ENCODE measurements at regions of chr17 and their contacts with region 1.

Region 1: DNA sequence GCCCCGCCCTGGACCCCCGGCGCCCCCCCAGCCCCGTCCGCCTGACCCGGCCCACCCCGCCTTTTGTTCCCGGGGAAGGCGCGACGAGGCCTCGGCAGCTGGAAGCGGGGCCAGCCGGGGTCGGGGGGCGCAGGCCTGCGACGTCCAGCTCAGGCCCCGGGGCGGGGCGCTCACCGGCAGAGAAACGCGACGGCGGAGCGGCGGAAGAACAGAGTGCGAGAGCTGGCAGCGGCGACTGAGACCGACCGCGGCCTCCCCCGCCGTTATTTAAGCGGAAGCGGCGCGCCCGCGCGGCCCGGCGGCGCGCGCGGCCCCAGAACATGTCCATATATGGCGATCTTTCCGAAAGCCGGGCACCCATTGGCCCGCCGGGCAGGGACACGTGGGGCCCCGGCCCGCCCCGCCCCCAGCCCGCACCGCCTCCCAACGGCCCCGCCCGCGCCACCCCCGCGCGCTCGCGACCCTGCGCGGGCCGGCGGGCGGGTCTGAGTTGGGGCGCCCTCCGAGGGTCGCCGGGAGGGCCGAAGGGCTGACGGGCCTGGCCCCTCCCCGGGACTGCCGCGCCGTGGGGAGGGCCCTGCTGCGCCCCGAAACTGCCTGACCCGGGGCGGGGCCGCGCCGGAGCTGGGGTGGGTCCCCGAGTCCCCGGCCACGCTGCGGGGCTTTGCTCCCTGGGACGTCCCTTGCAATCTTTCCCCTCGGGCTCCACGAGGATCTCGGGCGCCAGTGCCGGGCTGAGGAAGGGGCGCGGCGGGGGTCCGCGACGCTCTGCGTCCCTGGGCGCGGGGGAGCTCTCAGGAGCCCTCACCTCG is at the start of gene ACTG1:
- DNase-seq: peak; percentile 93
- H3K4me3 ChIP-seq: peak within 1 kb of the TSS; percentile 74 to 96
- H3K27ac ChIP-seq: peak within 1 kb of the TSS; percentile 99 to 100
- H3K4me1 ChIP-seq: peaks cover 37% of the 10 kb centered on the region
- H3K27me3 ChIP-seq: no peaks in the 10 kb centered on the region
- CTCF ChIP-seq: no peak
- POLR2A ChIP-seq: peak; percentile 49
- total RNA-seq, gene ACTG1: 1,790 to 2,057 TPM

Region 2: GRCh38 chr17:81397314-81398175 is 115.2 kb before region 1 on chr17:
- intact Hi-C with region 1: loop called (anchors 2 kb)
- DNase-seq: no peak
- H3K4me3 ChIP-seq: peak overlapping the region; percentile 57 to 65
- H3K27ac ChIP-seq: peak overlapping the region; percentile 93 to 97
- H3K4me1 ChIP-seq: peaks cover 41% of the 10 kb centered on the region
- H3K27me3 ChIP-seq: no peaks in the 10 kb centered on the region
- CTCF ChIP-seq: no peak
- POLR2A ChIP-seq: no peak

Region 3: GRCh38 chr17:81460856-81461460 is 51.8 kb before region 1 on chr17:
- intact Hi-C with region 1: no loop called
- DNase-seq: no peak
- H3K4me3 ChIP-seq: no peak overlapping the region
- H3K27ac ChIP-seq: no peak overlapping the region
- H3K4me1 ChIP-seq: no peaks in the 10 kb centered on the region
- H3K27me3 ChIP-seq: no peaks in the 10 kb centered on the region
- CTCF ChIP-seq: no peak
- POLR2A ChIP-seq: no peak

Region 4: DNA sequence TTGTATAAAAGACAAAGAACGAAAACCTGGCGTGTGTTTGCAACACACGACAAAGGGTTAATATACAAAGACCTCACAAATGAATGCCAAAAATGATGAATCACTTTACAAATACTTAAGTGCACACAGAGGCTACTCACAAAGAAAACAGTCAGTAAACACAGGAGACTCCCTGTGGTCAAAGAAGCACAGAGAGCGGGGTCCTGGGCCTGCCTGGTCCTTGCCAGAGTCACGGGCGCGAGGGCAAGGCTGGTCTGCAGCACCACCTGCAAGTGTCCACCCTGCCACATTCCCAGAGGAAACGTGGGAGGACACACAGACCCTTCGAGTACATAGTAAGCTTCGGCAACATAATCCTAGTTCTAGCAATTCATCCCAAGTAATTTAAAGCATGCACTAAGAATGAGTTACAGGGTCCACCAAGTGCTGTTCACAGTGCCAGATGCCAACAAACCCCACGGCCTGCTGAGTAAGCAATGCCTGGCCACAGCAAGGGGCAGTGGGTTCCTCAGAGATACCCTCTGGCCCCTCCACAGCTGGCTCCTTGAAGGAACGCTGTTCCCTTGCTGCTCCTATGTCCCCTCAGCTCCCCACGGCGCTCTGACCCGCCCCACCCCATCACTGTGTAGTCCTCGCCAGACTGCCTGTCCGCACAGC is 64.0 kb after region 1 on chr17:
- intact Hi-C with region 1: no loop called
- DNase-seq: no peak
- H3K4me3 ChIP-seq: no peak overlapping the region
- H3K27ac ChIP-seq: no peak overlapping the region
- H3K4me1 ChIP-seq: no peaks in the 10 kb centered on the region
- H3K27me3 ChIP-seq: no peaks in the 10 kb centered on the region
- CTCF ChIP-seq: no peak
- POLR2A ChIP-seq: no peak

Measured in testis (tissue), 5 donors.